ENCODE measurements at regions of chr5 and their contacts with region 1.

Region 1: GRCh38 chr5:123610665-123611405 is 98.9 kb downstream of the CSNK1G3 start:
- DNase-seq: peak; percentile 80
- H3K4me3 Mint-ChIP-seq: no peak overlapping the region
- H3K27ac Mint-ChIP-seq: no peak overlapping the region
- H3K4me1 Mint-ChIP-seq: peaks cover 9% of the 10 kb centered on the region
- H3K27me3 Mint-ChIP-seq: no peaks in the 10 kb centered on the region

Region 2: DNA sequence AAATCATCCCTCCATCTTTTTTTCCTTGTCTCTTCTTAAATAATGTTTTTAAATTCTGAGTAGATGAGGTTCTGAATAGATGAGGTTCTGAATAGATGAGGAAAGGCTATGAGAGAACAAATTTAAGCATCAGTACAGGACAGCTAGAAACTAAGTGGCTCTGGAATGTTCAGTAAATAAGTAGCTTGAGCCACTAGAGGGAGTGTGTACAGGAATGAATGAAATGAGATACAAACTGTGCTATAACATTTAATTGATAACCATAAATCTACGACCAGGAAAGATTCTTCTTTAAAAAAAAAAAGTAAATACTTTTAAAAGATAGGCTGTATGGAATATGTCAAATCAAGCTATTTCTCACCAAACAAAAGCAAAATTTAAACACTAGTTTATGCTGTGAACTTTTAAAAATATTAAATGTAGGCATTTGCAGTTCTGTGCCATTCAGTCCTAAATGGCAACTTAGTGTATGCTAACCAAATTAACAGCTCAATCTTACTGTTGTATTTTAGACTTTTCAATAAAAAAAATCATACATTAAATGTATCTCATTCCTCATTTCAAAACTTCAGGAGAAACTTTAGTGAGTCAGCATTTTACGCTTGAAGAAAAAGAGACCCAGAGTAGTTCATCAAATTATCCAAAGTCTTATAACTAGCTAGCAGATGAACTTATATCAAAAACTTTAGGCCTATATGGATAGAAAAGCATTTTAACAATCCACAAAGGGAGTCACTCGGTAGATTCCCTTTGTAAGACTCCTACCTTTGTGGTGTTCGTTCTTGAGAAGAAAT is 906.4 kb before region 1 on chr5:
- intact Hi-C with region 1: loop called (anchors 10 kb)
- DNase-seq: no peak
- H3K4me3 Mint-ChIP-seq: no peak overlapping the region
- H3K27ac Mint-ChIP-seq: no peak overlapping the region
- H3K4me1 Mint-ChIP-seq: peaks cover 4% of the 10 kb centered on the region
- H3K27me3 Mint-ChIP-seq: peaks cover 5% of the 10 kb centered on the region

Region 3: GRCh38 chr5:122896598-122897282 is 714.1 kb before region 1 on chr5:
- intact Hi-C with region 1: loop called (anchors 10 kb)
- DNase-seq: no peak
- H3K4me3 Mint-ChIP-seq: no peak overlapping the region
- H3K27ac Mint-ChIP-seq: no peak overlapping the region
- H3K4me1 Mint-ChIP-seq: no peaks in the 10 kb centered on the region
- H3K27me3 Mint-ChIP-seq: peaks cover 2% of the 10 kb centered on the region

Region 4: GRCh38 chr5:123423278-123424149 is 187.3 kb before region 1 on chr5 and contains the start of gene CEP120:
- intact Hi-C with region 1: loop called (anchors 2 kb)
- DNase-seq: peak; percentile 99
- H3K4me3 Mint-ChIP-seq: no peak within 1 kb of the TSS
- H3K27ac Mint-ChIP-seq: no peak within 1 kb of the TSS
- H3K4me1 Mint-ChIP-seq: peaks cover 17% of the 10 kb centered on the region
- H3K27me3 Mint-ChIP-seq: no peaks in the 10 kb centered on the region
- total RNA-seq, gene CEP120: 28.6 and 31.6 TPM in 2 replicates

Region 5: GRCh38 chr5:123545506-123545905 is 65.3 kb before region 1 on chr5:
- intact Hi-C with region 1: loop called (anchors 5 kb)
- DNase-seq: no peak
- H3K4me3 Mint-ChIP-seq: no peak overlapping the region
- H3K27ac Mint-ChIP-seq: no peak overlapping the region
- H3K4me1 Mint-ChIP-seq: peaks cover 41% of the 10 kb centered on the region
- H3K27me3 Mint-ChIP-seq: no peaks in the 10 kb centered on the region